ENCODE measurements at regions of chrX and their contacts with region 1.

Region 1: DNA sequence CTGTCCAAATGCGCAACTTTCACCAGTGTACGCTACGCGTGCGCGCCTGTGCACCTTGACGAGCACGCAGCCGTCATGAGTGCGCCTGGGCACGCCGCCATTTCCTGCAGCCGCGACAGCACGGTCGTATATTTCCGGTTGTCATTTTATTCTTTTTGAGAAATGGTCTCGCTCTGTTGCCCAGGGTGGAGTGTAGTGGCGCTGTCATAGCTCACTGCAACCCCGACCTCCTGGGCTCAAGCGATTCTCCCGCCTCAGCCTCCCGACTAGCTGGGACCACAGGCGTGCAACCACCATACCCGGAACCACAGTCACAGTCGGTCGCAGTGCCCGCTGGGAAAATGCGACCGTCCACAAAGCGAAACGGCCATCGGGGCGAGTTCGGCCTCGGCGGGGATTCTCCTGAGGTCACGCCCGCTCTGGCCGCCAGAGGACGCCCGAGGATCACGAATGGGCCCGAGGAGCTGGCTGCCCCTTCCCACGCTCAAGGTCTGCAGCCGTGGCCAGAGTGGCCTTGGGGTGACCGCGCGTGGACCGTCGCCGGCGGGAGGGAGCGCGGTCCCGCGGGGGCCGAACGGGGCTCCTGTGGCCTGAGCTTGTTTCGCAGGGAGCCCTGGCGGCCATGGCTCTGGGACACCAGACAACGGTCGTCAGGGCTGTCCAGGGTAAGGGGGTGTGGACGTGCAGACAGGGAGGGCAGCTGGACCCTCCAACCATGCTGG is 23.7 kb upstream of the PNMA3 start:
- DNase-seq: peak; percentile 54 to 77
- H3K4me3 ChIP-seq: peak overlapping the region; percentile 17; the same call in 1 of the 2 replicates
- H3K4me3 Mint-ChIP-seq: peak overlapping the region; percentile 42
- H3K27ac Mint-ChIP-seq: no peak overlapping the region
- H3K4me1 ChIP-seq: no peaks in the 10 kb centered on the region; the same call in 1 of the 2 replicates
- H3K4me1 Mint-ChIP-seq: no peaks in the 10 kb centered on the region
- H3K27me3 ChIP-seq: no peaks in the 10 kb centered on the region
- H3K27me3 Mint-ChIP-seq: peaks cover 6% of the 10 kb centered on the region
- CTCF ChIP-seq: peak; percentile 65 to 83

Region 2: DNA sequence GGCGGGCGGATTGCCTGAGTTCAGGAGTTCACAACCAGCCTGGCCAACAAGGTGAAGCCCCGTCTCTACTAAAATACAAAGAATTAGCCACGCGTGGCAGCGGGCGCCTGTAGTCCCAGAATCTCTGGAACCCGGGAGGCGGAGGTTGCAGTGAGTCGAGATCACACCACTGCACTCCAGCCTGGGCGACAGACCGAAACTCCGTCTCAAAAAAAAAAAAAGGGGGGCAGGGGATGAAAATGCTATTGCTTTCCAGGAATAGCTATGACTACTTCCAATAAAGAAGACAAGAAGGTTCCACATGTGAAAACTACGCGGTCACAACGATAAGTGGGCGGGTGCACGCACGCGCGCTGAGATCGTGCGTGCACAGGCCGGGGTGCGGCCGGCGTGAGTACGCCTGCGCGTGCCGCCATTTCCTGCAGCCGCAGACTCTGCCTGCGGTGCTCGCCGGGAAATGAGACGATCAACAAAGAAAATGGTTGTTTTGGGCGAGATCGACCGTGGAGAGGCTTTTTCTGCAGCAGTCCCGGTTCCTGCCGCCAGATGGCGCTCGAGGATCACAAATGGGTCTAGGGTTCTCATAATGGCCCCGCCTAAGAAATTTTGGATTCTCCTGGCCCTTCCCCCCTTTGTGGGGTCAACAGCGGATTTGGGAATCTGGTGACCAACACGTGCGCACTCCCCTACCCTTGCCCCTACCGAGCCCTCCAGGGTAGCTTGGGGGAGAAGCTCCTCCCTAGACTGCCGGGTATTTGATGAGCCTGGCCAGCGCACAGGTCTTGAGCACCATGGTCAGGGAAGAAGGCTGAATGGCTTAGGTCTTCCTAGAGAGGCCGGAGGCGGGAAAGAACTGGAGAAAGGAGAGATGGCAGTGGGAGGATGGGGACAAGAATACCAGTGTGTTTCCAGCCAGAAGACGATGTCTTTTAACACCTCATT is 73.8 kb before region 1 on chrX:
- CTCF ChIA-PET with region 1: interaction called, 3 read pairs
- POLR2A ChIA-PET with region 1: no interaction called
- intact Hi-C with region 1: loop called (anchors 2 kb)
- DNase-seq: peak; percentile 83 to 87
- H3K4me3 ChIP-seq: peak overlapping the region; percentile 45
- H3K4me3 Mint-ChIP-seq: peak overlapping the region; percentile 77
- H3K27ac Mint-ChIP-seq: peak overlapping the region; percentile 92
- H3K4me1 ChIP-seq: no peaks in the 10 kb centered on the region
- H3K4me1 Mint-ChIP-seq: no peaks in the 10 kb centered on the region
- H3K27me3 ChIP-seq: no peaks in the 10 kb centered on the region
- H3K27me3 Mint-ChIP-seq: no peaks in the 10 kb centered on the region
- CTCF ChIP-seq: peak; percentile 70 to 74

Region 3: GRCh38 chrX:153438531-153438930 is 406.0 kb after region 1 on chrX:
- CTCF ChIA-PET with region 1: interaction called, 3 read pairs
- POLR2A ChIA-PET with region 1: no interaction called
- intact Hi-C with region 1: loop called (anchors 10 kb)
- DNase-seq: peak; percentile 41 to 46
- H3K4me3 ChIP-seq: no peak overlapping the region
- H3K4me3 Mint-ChIP-seq: no peak overlapping the region
- H3K27ac Mint-ChIP-seq: no peak overlapping the region
- H3K4me1 ChIP-seq: no peaks in the 10 kb centered on the region
- H3K4me1 Mint-ChIP-seq: no peaks in the 10 kb centered on the region
- H3K27me3 ChIP-seq: no peaks in the 10 kb centered on the region
- H3K27me3 Mint-ChIP-seq: peaks cover 3% of the 10 kb centered on the region
- CTCF ChIP-seq: peak in 1 of 2 experiments; percentile 48

Region 4: DNA sequence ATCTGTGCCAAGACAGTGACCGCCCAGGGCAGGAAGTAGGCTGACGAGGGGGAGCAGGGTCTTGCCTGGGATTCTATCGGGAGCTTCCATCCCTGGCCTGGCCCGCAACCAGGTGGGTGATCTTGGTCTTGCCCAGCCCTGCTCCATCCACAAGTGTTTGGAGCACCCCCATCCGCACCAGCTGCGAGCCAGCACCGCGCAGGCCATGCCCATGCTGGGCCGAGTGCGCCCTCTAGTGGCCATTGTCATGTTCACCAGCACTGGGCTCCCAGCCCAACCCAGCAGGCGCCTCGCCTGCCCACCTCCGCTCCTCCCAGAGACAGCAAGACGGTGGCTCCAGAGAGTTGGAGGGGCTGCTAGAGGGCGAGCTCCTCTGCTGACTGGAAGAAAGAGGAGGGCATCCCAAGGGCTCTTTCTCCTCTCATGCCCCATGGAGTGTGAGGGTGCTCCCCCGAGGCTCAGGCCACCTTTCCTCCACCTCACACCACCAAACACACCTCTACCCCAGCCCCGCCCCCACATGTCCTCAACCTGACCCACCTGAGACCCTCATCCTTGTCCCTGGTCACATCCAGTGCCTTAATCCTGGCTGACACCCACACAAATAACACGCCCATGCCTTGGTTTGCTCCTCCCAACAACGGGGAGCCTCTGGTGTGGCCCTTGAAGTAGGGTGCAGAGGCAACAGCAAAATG is 475.1 kb after region 1 on chrX:
- CTCF ChIA-PET with region 1: interaction called, 3 read pairs
- POLR2A ChIA-PET with region 1: no interaction called
- intact Hi-C with region 1: loop called (anchors 5 kb)
- DNase-seq: peak; percentile 65 to 82
- H3K4me3 ChIP-seq: no peak overlapping the region
- H3K4me3 Mint-ChIP-seq: no peak overlapping the region
- H3K27ac Mint-ChIP-seq: no peak overlapping the region
- H3K4me1 ChIP-seq: no peaks in the 10 kb centered on the region
- H3K4me1 Mint-ChIP-seq: no peaks in the 10 kb centered on the region
- H3K27me3 ChIP-seq: no peaks in the 10 kb centered on the region
- H3K27me3 Mint-ChIP-seq: peaks cover 3% of the 10 kb centered on the region
- CTCF ChIP-seq: peak; percentile 68 to 78

Measured in Caco-2 (cell line).